ENCODE measurements at regions of chr1 and their contacts with region 1.

Region 1: DNA sequence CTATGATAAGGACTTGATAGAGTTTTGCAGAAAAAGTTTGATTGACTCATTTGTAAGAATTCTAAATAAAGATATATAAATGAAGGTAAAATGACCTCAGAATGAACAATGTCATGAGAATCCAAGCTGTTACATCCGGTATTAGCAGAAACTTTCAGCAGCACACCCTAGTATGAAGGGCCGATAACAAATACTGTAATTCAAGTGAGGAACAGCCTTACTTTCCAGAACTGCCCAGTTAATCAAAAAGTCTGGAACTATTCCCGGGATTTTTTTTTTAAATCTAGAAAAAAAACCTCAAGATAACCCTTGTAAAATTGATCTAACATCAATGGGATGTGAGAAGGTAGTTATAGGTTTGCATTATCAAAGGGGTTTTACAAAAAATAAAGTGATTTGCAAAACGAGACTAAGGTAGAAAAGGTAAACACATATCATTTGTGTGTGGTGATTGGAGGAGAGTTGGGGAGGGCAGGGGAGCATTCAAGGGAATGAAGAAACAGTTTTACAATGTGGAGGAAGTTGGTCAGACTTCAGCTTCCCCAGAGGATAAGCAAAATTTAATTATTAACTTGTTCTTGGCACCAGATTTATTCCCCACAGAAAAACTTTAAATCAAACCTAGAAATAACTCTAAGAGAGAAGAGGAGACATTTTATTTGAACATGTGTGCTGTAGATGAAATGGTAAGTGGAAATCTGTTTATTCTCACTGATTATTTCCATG is 75.9 kb upstream of the VCAM1 start:
- DNase-seq: no peak

Region 2: DNA sequence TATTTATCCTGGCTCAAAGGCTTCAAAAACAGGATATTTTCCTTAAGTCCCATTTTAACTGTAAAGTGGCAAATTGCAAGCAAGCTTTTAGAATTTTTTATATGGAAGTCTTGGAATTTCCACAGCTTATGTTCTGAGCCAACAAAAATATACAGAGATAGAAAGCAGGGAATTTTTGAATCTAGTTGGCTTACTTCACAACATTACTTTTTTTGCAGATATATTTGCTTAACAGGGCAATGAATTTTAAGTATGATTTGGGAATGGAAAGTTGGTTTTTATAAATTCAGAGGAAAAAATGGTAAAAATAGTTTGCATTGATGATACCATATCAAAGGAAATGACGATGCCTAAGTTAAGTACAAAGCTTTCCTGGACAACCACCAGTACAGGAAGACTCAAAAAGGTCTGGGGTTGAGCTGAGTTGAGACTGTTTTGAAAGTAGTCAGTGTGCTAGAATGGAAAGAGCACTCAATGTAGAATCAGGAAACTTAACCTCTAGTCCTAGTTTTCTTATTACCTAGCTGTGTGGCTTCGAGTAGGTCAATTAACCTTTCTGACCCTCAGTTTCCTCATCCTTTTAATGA is 64.9 kb after region 1 on chr1:
- intact Hi-C with region 1: loop called (anchors 10 kb)
- DNase-seq: no peak

Measured in cardiac septum (tissue), 1 donor.